ENCODE measurements at regions of chr11 and their contacts with region 1.

Region 1: DNA sequence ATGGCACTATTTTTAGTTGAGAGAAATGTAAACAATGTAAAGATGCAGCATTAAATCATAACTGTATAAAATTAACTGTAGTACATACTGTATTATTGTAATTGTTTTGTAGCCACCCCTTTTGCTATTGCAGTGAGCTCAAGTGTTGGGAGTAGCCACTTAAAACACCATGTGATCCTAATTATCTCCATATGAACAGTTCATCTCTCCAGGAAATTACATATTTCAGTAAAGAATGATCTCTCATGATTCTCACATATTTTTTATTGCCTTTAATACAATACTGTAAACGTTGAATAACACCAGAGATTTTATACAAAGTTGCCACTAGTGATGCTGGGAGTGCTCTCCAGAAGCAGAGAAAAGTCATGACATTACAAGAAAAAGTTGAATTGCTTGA is 1768.6 kb downstream of the LRRC4C start:
- DNase-seq: no peak
- ATAC-seq: no peak
- H3K4me3 ChIP-seq: no peak overlapping the region
- H3K27ac ChIP-seq: no peak overlapping the region
- H3K4me1 ChIP-seq: no peaks in the 10 kb centered on the region
- H3K27me3 ChIP-seq: no peaks in the 10 kb centered on the region
- CTCF ChIP-seq: no peak
- POLR2A ChIP-seq: no peak

Region 2: DNA sequence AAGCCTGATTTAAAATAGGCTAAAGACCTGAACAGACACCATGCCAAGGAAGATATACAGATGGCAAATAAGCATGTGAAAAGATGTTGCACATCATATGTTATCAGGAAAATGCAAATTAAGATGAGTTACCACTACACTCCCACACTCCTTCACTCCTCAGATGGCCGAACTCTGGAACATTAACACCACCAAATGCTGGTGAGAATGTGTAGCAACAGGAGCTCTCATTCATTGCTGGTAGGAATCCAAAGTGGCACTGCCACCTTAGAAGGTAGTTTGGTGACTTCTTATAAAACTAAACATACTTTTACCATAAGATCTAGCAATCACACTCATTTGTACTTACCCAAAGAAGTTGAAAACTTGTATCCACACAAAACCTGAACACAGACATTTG is 278.7 kb before region 1 on chr11:
- intact Hi-C with region 1: no loop called
- DNase-seq: no peak
- ATAC-seq: no peak
- H3K4me3 ChIP-seq: no peak overlapping the region
- H3K27ac ChIP-seq: no peak overlapping the region
- H3K4me1 ChIP-seq: no peaks in the 10 kb centered on the region
- H3K27me3 ChIP-seq: no peaks in the 10 kb centered on the region
- CTCF ChIP-seq: no peak
- POLR2A ChIP-seq: no peak

Region 3: DNA sequence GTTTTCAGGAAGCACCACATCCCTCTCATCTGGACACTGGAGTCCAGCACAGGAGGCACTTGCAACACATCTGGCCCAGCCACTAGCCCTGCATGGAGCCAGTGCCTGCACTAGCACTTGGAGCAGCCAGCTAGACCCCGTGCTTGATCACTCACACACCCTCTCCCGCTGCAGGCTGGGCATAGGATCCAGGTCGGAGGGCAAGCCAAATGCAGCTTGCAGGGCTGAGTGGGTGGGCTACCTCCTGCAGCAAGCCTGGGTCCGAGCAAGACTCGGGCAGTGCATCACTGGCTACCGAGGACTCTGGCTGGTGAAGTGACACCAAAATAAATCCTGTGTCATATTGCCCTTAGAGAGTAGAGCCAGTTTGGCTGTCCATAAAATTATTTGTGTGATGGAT is 26.8 kb before region 1 on chr11:
- intact Hi-C with region 1: no loop called
- DNase-seq: no peak
- ATAC-seq: no peak
- H3K4me3 ChIP-seq: no peak overlapping the region
- H3K27ac ChIP-seq: no peak overlapping the region
- H3K4me1 ChIP-seq: no peaks in the 10 kb centered on the region
- H3K27me3 ChIP-seq: no peaks in the 10 kb centered on the region
- CTCF ChIP-seq: no peak
- POLR2A ChIP-seq: no peak

Region 4: GRCh38 chr11:39745401-39745800 is 54.5 kb after region 1 on chr11:
- intact Hi-C with region 1: loop called in 1 of 10 experiments (anchors 10 kb)
- DNase-seq: no peak
- ATAC-seq: no peak
- H3K4me3 ChIP-seq: no peak overlapping the region
- H3K27ac ChIP-seq: no peak overlapping the region
- H3K4me1 ChIP-seq: no peaks in the 10 kb centered on the region
- H3K27me3 ChIP-seq: no peaks in the 10 kb centered on the region
- CTCF ChIP-seq: no peak
- POLR2A ChIP-seq: no peak